ENCODE measurements at regions of chr12 and their contacts with region 1.

Region 1: DNA sequence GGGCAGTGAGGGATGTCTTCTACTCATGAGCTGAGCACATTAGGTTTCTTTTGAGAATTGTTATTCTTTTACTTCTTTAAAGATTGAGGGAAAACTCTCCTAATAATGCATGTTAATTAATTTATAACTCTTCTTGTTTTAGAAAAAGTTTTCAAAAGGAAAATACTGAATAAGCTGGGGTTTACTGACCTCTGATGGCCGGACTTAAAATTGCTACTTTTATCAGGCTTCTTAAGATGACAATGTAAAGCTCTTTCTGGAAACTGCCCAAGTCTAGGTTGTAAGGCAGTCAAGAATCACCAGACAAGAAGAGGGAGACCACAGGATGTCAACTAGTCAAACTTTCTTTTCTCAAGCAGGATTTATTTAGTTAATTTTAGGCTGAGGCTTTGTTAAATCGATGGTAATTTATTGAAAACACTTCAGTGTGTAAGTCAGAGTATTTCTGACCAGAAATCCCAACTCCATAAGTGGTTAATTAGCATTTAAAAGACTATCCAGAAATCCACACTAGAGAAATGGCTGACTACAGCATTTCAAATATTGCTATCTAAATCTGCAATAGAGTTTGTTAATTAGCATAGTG is 82.1 kb downstream of the AVPR1A start:
- DNase-seq: no peak
- ATAC-seq: peak; percentile 57; the same call in 1 of the 2 replicates
- H3K4me3 Mint-ChIP-seq: no peak overlapping the region
- H3K27ac Mint-ChIP-seq: no peak overlapping the region
- H3K4me1 Mint-ChIP-seq: peaks cover 14% of the 10 kb centered on the region
- H3K27me3 Mint-ChIP-seq: no peaks in the 10 kb centered on the region
- CTCF ChIP-seq: peak; percentile 21; the same call in 1 of the 2 replicates

Region 2: DNA sequence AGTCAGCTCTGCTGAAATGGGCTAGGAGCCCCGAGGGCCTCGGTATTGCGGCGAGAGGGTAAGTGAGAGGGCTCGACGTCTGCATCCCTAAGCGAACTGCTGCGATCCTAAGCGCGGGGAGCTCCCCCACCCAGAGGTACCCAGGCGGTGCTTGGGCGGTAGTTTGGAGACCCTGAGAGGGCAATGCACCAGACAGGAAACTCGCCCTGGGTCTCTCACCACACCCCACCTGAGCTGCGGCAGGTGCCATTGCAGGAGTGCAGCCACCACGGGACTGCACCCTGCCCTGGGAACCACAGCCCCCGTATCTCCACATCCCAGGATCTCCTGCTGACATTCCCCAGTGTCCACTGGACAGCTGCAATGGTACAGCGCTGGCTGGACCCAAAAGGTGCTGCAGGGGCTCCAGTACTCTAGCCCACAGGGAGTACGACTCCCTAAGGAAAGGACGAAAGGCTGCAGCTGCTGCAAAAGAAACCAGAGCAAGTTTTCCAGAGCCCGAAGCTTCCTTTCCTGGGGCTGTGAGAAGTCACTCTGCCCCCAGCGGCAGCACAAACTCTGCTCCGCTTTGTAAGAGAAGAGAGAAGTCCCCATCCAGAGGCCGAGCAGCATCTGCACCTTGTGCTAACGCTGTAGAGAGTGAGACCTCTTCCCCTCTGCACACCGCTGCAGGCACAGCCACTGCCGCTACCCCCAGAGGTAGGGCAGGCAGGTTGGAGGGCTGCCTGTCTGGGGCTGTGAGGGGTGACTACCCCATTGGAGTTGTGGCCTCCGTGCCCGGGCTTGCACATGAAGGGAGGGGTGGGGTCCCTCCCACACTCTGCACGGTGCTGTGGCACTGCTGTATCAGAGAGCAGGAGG is 633.4 kb before region 1 on chr12:
- CTCF ChIA-PET with region 1: interaction called, 15 read pairs
- POLR2A ChIA-PET with region 1: no interaction called
- DNase-seq: peak; percentile 70
- ATAC-seq: peak; percentile 94
- H3K4me3 Mint-ChIP-seq: peak overlapping the region; percentile 86
- H3K27ac Mint-ChIP-seq: no peak overlapping the region
- H3K4me1 Mint-ChIP-seq: peaks cover 16% of the 10 kb centered on the region
- H3K27me3 Mint-ChIP-seq: peaks cover 62% of the 10 kb centered on the region
- CTCF ChIP-seq: no peak

Region 3: GRCh38 chr12:62799126-62799736 is 269.7 kb before region 1 on chr12:
- CTCF ChIA-PET with region 1: interaction called, 23 read pairs
- POLR2A ChIA-PET with region 1: no interaction called
- DNase-seq: peak; percentile 81
- ATAC-seq: peak; percentile 85
- H3K4me3 Mint-ChIP-seq: no peak overlapping the region
- H3K27ac Mint-ChIP-seq: no peak overlapping the region
- H3K4me1 Mint-ChIP-seq: peaks cover 28% of the 10 kb centered on the region
- H3K27me3 Mint-ChIP-seq: no peaks in the 10 kb centered on the region
- CTCF ChIP-seq: peak; percentile 88

Region 4: GRCh38 chr12:62934799-62935674 is 133.9 kb before region 1 on chr12 and contains the start of gene PPM1H:
- CTCF ChIA-PET with region 1: interaction called, 27 read pairs
- POLR2A ChIA-PET with region 1: no interaction called
- DNase-seq: peak; percentile 97
- ATAC-seq: peak; percentile 91
- H3K4me3 Mint-ChIP-seq: peak within 1 kb of the TSS; percentile 100
- H3K27ac Mint-ChIP-seq: peak within 1 kb of the TSS; percentile 96
- H3K4me1 Mint-ChIP-seq: peaks cover 44% of the 10 kb centered on the region
- H3K27me3 Mint-ChIP-seq: no peaks in the 10 kb centered on the region
- CTCF ChIP-seq: peak; percentile 53; the same call in 1 of the 2 replicates
- total RNA-seq, gene PPM1H: 37.1 to 45.6 TPM (median 40.9 TPM) in 3 replicates

Region 5: DNA sequence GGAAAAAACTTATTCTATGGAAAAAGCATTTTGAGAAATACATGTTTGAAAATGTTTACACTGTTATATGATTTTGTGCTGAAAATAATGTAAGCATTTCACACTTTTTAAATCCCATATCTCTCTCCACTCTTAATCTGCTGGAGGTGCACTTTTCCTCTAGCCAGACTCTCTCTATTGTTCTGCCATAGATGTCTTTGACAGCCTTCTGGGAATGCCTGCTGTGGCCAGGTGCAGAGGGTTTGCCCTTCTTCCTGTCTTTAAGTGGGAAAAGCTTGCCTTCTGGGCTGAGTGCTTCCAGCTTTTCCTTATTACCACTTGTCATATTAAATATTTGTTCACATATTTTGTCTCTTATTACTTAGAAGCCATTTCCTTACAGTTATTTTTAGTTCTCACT is 73.9 kb before region 1 on chr12:
- CTCF ChIA-PET with region 1: interaction called, 28 read pairs
- POLR2A ChIA-PET with region 1: no interaction called
- DNase-seq: peak; percentile 50
- ATAC-seq: peak; percentile 94
- H3K4me3 Mint-ChIP-seq: no peak overlapping the region
- H3K27ac Mint-ChIP-seq: no peak overlapping the region
- H3K4me1 Mint-ChIP-seq: peaks cover 28% of the 10 kb centered on the region
- H3K27me3 Mint-ChIP-seq: no peaks in the 10 kb centered on the region; the same call in 1 of the 2 replicates
- CTCF ChIP-seq: no peak